OCI-LY7 (cell line): ENCODE measurements at regions of chr10 and their contacts with region 1.

Region 1: DNA sequence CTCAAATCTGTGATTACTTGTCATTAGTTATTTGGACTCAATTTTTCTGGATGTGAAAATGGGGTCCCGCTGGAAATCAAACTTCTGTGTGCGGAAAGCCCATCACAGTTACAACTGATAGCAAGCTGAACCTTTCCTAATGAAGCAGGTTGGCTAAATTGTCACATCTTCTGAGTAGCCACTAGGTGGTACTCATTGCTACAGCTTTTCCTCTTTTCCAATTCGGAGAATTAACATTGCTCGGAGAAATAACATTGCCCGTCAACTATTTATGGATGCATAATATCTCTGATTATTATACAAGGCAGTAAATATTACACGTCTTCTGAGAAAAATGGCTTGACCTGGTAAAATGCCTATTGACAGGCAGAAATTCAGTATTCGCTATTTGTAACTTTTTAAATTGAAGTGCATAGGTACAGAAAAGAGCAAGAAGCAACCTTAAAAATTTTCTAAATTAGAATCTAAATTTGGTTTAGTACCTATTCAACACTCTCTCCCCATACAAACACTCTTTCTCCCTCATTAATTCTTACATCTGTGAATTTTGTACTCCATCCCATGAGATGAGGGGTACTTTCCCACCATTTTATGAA is 17.3 kb upstream of the BLOC1S2 start:
- DNase-seq: peak; percentile 50
- H3K4me3 ChIP-seq: no peak overlapping the region
- H3K27ac ChIP-seq: no peak overlapping the region
- H3K4me1 ChIP-seq: no peaks in the 10 kb centered on the region
- CTCF ChIP-seq: peak; percentile 87

Region 2: GRCh38 chr10:99845837-99846382 is 457.9 kb before region 1 on chr10:
- CTCF ChIA-PET with region 1: no interaction called
- POLR2A ChIA-PET with region 1: no interaction called
- intact Hi-C with region 1: loop called (anchors 10 kb)
- DNase-seq: peak; percentile 90
- H3K4me3 ChIP-seq: no peak overlapping the region
- H3K27ac ChIP-seq: no peak overlapping the region
- H3K4me1 ChIP-seq: peaks cover 5% of the 10 kb centered on the region
- CTCF ChIP-seq: peak; percentile 98

Region 3: GRCh38 chr10:100338434-100339036 is 34.7 kb after region 1 on chr10:
- CTCF ChIA-PET with region 1: no interaction called
- POLR2A ChIA-PET with region 1: no interaction called
- intact Hi-C with region 1: loop called (anchors 1 kb)
- DNase-seq: peak; percentile 81
- H3K4me3 ChIP-seq: peak overlapping the region; percentile 24
- H3K27ac ChIP-seq: peak overlapping the region; percentile 59
- H3K4me1 ChIP-seq: peaks cover 23% of the 10 kb centered on the region
- CTCF ChIP-seq: peak; percentile 95

Region 4: DNA sequence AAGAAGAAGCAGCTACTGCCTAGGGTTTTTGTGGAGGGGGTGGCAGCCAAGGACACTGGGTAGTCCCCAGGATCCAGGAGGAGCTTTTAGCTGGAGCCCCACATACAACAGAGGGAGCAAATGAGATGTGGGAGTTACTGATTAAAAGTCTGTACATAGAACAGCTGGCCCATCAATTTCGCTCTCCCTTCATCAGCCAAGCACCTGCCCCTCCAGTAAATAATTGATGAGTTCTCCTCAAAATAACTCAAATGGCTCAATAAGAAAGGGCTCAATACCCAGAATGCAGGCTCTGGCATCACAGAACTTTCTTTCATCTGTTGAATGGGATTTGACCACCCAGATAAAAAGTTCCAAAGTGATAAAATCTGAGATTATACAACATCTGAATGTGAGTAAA is 143.8 kb after region 1 on chr10:
- CTCF ChIA-PET with region 1: no interaction called
- POLR2A ChIA-PET with region 1: no interaction called
- intact Hi-C with region 1: no loop called
- DNase-seq: no peak
- H3K4me3 ChIP-seq: no peak overlapping the region
- H3K27ac ChIP-seq: no peak overlapping the region
- H3K4me1 ChIP-seq: no peaks in the 10 kb centered on the region
- CTCF ChIP-seq: no peak

Region 5: GRCh38 chr10:100508691-100509150 is 204.9 kb after region 1 on chr10:
- CTCF ChIA-PET with region 1: no interaction called
- POLR2A ChIA-PET with region 1: no interaction called
- intact Hi-C with region 1: loop called (anchors 5 kb)
- DNase-seq: peak; percentile 70
- H3K4me3 ChIP-seq: no peak overlapping the region
- H3K27ac ChIP-seq: no peak overlapping the region
- H3K4me1 ChIP-seq: peaks cover 18% of the 10 kb centered on the region
- CTCF ChIP-seq: peak; percentile 83

Region 6: DNA sequence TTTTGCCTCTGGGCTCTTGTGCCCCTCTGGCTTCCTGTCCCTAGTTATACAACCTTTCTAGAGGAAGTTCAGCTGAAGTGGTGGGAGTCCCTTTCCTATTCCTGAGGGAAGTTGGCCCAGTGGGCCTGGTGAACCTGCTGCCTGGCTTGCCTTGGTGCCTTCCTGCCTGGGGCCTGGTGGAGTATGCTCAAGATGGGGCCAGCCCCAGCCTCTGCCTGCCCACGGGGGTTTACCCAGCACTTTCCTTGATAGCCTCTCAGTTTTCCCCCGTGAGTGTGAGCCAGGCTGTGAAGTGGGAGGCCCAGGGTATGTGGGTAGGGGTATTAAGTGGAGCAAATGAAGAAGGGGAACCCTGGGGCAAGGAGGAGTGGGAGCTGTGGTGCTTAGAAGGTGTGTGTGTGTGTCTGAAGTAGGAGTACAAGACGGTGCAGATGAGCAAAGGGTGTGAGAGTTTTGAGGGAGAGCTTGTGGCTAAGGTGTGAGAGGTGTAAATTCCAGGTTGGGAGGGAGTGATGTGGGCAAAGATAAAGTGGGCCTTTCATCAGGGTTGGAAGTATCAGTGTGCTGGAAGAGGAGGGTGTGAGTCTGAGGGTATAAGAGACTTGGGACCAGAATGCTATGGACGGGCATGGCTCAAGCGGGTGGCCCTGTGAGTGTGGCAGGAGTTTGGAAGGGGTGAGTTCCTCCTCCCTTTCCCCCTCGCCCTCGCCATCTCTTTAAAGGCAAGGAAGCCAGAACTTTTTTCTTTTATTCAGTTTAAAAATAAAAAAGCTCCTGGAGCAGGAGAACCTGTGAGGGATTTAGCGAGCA is 430.7 kb after region 1 on chr10:
- CTCF ChIA-PET with region 1: interaction called, 13 read pairs
- POLR2A ChIA-PET with region 1: no interaction called
- intact Hi-C with region 1: no loop called
- DNase-seq: no peak
- H3K4me3 ChIP-seq: no peak overlapping the region
- H3K27ac ChIP-seq: no peak overlapping the region
- H3K4me1 ChIP-seq: no peaks in the 10 kb centered on the region
- CTCF ChIP-seq: no peak

Region 7: DNA sequence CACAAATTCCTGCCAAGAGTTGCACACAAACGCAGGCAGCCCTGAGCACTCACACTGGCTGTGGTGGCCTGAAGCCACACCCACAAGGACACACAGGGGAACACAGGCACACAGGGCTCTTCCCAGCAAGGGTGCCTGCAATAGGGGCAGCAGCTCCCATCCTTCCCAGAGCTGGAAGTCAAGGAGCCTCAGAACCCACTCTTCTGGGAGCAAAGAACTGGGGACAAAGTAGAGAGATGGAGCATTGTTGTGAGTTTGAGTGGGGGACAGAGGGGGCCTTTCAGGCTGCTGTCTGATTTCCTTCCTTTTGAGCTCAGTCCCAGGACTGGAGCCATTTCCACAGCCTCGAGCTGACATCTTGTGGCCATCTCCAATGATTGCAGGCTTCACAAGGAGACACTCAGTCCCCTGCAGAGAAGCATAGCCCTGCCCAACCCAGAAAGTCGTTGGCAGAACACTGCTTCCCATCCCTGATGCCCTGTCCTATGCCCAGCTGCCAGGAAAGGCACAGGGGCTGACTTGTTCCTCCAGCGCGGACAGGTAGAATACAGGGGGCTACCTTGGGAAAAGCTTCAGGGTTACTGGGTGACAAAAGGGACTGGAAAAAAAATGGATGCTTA is 574.6 kb after region 1 on chr10:
- CTCF ChIA-PET with region 1: no interaction called
- POLR2A ChIA-PET with region 1: no interaction called
- intact Hi-C with region 1: loop called (anchors 10 kb)
- DNase-seq: peak; percentile 86
- H3K4me3 ChIP-seq: no peak overlapping the region
- H3K27ac ChIP-seq: no peak overlapping the region
- H3K4me1 ChIP-seq: peaks cover 35% of the 10 kb centered on the region
- CTCF ChIP-seq: peak; percentile 89